AG04449 (cell line): ENCODE measurements at regions of chr21 and their contacts with region 1.

Region 1: DNA sequence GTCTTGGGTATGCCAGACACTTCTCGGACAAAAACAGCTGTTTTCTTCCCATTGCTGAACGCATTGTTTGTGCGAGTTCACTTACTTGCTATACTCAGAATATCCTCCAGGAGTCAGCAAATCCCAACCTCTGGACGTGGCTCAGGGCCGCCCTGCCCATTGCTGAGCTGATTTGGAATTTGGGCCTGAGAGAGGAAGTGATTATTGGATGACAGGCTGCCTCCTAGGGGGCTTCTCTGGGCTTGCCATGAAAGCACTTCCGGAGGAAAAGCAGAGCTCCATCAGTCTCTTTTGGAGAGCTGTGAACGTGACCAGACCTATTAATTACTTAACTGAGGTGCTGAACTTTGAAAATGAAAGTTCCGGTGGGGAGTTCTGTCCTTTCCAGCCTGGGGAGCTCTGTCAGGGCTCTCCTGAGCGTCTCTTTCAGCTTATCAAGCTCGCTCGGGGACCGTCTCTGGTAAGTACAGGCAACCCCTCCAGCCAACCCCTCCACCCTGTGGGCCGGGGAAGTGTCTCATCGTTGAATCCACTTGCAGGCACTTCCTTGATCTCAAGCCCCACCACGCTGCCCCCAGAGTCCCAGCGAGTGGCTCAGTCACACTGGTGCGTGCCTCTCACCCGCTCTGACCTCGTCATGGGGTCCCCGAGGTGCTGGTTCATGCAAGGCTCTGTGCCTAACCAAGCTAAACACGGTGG is 76.9 kb downstream of the CLIC6 start:
- DNase-seq: no peak
- H3K4me3 ChIP-seq: no peak overlapping the region; the same call in 1 of the 2 replicates
- CTCF ChIP-seq: peak; percentile 75

Region 2: DNA sequence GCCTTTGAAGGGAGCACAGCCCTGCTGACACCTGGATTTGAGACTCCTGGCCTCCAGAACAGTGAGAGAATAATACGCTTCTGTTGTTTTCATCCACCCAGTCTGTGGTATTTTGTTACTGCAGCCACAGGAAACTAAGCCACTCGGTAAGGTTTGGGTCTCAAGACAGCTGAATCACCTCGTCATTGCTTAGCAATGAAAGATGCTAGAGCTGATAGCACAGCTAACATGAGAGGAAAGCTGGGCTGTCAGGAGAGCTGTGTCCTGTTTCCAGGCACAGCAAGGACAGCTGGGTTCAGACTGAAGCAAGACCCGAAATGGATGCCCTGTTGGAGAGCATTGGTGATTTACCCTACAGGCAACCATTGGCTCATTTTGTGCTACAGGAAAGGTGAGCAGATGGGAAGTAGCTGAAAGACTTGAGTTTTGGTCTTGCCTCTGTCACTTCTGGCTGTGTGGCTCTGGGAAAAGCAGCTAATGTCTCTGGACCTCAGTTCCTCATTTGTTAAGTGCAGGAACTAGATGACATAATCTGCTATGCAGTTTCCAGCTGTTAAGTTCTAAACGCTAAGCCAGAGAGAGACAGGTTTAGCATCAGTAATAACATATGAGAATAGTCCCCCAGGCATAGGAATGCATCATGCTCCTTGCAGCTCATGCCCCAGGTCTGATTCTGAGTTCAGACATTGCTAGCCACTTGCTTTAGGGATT is 18.9 kb before region 1 on chr21:
- CTCF ChIA-PET with region 1: interaction called, 15 read pairs
- POLR2A ChIA-PET with region 1: no interaction called
- DNase-seq: no peak
- H3K4me3 ChIP-seq: no peak overlapping the region
- CTCF ChIP-seq: no peak

Region 3: GRCh38 chr21:34771512-34772028 is 25.9 kb after region 1 on chr21:
- CTCF ChIA-PET with region 1: interaction called, 10 read pairs
- POLR2A ChIA-PET with region 1: no interaction called
- DNase-seq: no peak
- H3K4me3 ChIP-seq: no peak overlapping the region
- CTCF ChIP-seq: no peak

Region 4: GRCh38 chr21:34845521-34846451 is 100.1 kb after region 1 on chr21:
- CTCF ChIA-PET with region 1: interaction called, 11 read pairs
- POLR2A ChIA-PET with region 1: no interaction called
- DNase-seq: no peak
- H3K4me3 ChIP-seq: no peak overlapping the region
- CTCF ChIP-seq: no peak

Region 5: DNA sequence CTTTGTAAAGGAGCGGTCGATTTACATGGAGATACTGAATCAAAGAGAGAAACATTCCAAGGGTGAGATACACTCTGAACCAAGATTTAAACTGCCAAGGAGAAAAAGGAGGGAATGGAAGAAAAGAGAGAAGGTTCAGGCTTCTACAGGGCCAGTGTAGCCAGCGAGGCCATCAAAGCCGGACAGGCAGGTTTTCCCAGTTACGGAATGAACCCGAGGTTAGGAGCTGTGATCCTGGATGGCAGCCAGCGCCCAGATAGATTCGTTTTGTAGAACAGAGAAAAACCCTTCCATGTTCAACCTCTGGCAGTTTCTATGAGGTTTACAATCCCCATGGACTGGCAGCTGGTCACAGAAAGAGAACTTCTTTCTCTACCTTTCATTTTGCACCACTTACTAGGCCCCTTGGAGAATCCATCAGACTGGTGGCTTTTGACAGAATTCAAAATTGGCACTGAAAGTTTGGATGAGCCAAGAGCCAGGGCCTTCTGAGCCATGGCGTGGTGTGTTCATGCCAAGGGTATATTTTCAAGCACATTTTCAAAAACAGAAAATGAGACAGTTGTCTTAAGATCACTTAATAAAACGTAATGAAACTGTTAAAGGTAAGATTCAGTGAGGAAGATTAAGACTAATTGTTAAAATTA is 131.9 kb after region 1 on chr21:
- CTCF ChIA-PET with region 1: interaction called, 15 read pairs
- POLR2A ChIA-PET with region 1: no interaction called
- DNase-seq: no peak
- H3K4me3 ChIP-seq: no peak overlapping the region
- CTCF ChIP-seq: no peak

Region 6: GRCh38 chr21:34888569-34889319 is 143.0 kb after region 1 on chr21:
- CTCF ChIA-PET with region 1: interaction called, 22 read pairs
- POLR2A ChIA-PET with region 1: interaction called, 12 read pairs
- DNase-seq: peak; percentile 82
- H3K4me3 ChIP-seq: peak overlapping the region; percentile 83
- CTCF ChIP-seq: no peak

Region 7: DNA sequence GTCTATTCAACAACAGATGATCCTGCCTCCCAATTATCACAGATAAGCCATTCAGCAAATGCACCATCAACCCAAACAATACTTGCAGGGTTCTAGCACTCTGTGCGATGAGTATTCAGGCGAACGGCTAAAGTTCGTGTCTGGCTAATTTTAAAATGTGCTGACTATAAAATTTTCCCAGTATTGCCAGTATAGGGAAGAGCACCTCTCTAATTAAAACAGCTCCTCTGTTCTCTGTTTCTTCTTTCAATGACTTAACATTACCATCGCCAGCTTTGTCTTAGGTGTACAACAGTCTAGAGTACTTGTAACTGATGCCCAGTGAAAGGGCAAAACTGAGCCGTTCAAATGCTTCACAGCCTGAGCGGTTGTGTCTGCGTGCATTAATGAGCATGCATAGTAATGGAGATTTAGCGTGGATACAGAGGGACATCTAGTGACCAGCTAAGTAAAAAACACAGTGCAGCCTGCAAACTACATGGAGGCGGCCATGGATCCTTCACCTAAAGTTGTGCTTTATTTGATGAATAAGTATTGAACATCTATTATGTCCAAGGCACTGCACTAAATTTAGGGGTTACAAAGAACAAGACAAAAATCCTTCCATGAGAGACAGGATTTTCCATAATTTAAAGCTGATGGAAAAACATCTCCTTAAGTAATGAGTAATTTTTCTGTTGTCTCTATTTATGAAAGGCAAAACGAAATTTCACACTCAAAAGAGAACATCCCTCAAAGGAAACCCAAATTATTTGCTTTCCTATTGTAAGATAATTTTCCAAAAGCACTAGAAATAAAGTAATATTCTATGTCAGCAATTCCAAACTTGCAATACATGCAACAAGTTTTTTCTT is 1194.6 kb after region 1 on chr21:
- CTCF ChIA-PET with region 1: interaction called, 21 read pairs
- POLR2A ChIA-PET with region 1: no interaction called
- DNase-seq: peak; percentile 28
- H3K4me3 ChIP-seq: no peak overlapping the region
- CTCF ChIP-seq: peak; percentile 69